ENCODE measurements at regions of chr2 and their contacts with region 1.

Region 1: GRCh38 chr2:147082850-147083522 is 761.8 kb upstream of the ACVR2A start:
- DNase-seq: peak; percentile 74
- H3K4me3 Mint-ChIP-seq: no peak overlapping the region
- H3K27ac Mint-ChIP-seq: no peak overlapping the region
- H3K4me1 Mint-ChIP-seq: peaks cover 3% of the 10 kb centered on the region
- H3K27me3 Mint-ChIP-seq: peaks cover 9% of the 10 kb centered on the region

Region 2: GRCh38 chr2:147045113-147045512 is 37.9 kb before region 1 on chr2:
- CTCF ChIA-PET with region 1: interaction called, 3 read pairs
- intact Hi-C with region 1: loop called (anchors 2 kb)
- DNase-seq: peak; percentile 67
- H3K4me3 Mint-ChIP-seq: no peak overlapping the region
- H3K27ac Mint-ChIP-seq: no peak overlapping the region
- H3K4me1 Mint-ChIP-seq: peaks cover 4% of the 10 kb centered on the region
- H3K27me3 Mint-ChIP-seq: no peaks in the 10 kb centered on the region

Region 3: GRCh38 chr2:147067136-147067535 is 15.8 kb before region 1 on chr2:
- CTCF ChIA-PET with region 1: no interaction called
- intact Hi-C with region 1: no loop called
- DNase-seq: no peak
- H3K4me3 Mint-ChIP-seq: no peak overlapping the region
- H3K27ac Mint-ChIP-seq: no peak overlapping the region
- H3K4me1 Mint-ChIP-seq: peaks cover 5% of the 10 kb centered on the region
- H3K27me3 Mint-ChIP-seq: peaks cover 17% of the 10 kb centered on the region

Region 4: DNA sequence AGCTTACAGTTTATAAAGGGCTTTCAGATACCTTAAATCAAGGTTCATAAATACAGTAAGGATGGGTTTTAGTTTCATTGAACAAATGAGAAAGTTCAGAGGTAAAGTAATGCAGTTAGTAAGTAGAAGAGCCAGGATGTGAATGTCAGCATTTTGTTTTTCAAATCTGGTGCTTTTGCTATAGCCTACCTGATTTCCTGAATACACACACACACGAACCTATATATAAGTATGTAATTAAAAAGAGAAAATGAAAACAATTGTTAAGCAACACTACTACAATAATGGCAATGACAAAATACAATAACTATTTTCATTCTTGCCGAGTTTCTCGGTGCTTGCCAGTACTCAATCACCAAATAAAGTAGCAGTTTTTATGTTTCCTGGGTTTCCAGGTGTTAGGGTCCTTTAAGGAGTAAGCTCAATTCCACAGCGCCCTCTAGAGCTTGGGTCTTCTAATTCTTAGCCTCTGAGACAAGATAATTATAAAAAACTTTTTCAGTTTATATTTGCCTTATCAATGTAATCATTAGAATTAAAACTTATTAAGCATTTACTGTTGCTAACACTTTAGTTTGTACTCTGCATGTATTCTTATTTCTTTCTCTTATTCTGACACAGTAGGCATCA is 248.9 kb after region 1 on chr2:
- CTCF ChIA-PET with region 1: interaction called, 9 read pairs
- intact Hi-C with region 1: loop called (anchors 1 kb)
- DNase-seq: peak; percentile 68
- H3K4me3 Mint-ChIP-seq: no peak overlapping the region
- H3K27ac Mint-ChIP-seq: no peak overlapping the region
- H3K4me1 Mint-ChIP-seq: peaks cover 13% of the 10 kb centered on the region
- H3K27me3 Mint-ChIP-seq: no peaks in the 10 kb centered on the region

Region 5: DNA sequence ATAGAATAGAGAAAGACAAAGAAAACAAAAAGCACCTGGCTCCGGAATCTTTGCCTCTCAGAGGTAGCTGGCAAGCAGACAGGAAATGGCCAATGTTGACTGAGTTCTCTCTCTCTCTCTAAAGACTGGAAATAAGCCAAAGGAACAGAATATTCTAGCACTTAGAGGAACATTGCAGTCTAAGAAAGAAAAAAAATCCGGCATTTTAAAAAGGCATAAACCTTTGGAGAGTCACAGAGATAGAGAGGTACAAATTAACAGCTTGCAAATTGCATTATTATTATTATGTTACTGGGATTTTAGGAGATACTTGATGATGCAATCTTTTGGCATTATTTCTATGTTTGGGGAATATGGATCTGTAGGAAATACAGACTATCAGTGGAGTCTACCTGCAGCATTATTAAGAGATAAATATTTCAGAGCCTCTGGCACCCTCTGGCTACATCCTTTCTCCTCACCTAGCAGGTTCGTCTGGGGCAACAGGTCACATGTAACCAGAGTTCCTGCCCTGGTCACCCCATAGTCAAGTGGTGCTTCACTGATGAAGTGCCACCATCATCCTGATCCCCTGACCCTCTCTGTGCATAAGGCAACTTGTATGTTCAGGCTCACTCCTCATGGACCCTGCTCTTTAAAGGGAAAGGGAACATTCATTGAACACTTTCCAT is 443.0 kb after region 1 on chr2:
- CTCF ChIA-PET with region 1: no interaction called
- intact Hi-C with region 1: loop called (anchors 10 kb)
- DNase-seq: no peak
- H3K4me3 Mint-ChIP-seq: no peak overlapping the region
- H3K27ac Mint-ChIP-seq: no peak overlapping the region
- H3K4me1 Mint-ChIP-seq: peaks cover 19% of the 10 kb centered on the region
- H3K27me3 Mint-ChIP-seq: no peaks in the 10 kb centered on the region

Region 6: GRCh38 chr2:147636238-147636882 is 553.4 kb after region 1 on chr2:
- CTCF ChIA-PET with region 1: no interaction called
- intact Hi-C with region 1: loop called (anchors 10 kb)
- DNase-seq: no peak
- H3K4me3 Mint-ChIP-seq: no peak overlapping the region
- H3K27ac Mint-ChIP-seq: no peak overlapping the region
- H3K4me1 Mint-ChIP-seq: peaks cover 24% of the 10 kb centered on the region
- H3K27me3 Mint-ChIP-seq: no peaks in the 10 kb centered on the region

Measured in activated naive CD4-positive, alpha-beta T cell treated with anti-CD3 and anti-CD28 coated beads for 36 hours (primary cell).